MCF 10A (cell line): ENCODE measurements at regions of chr11 and their contacts with region 1.

Region 1: DNA sequence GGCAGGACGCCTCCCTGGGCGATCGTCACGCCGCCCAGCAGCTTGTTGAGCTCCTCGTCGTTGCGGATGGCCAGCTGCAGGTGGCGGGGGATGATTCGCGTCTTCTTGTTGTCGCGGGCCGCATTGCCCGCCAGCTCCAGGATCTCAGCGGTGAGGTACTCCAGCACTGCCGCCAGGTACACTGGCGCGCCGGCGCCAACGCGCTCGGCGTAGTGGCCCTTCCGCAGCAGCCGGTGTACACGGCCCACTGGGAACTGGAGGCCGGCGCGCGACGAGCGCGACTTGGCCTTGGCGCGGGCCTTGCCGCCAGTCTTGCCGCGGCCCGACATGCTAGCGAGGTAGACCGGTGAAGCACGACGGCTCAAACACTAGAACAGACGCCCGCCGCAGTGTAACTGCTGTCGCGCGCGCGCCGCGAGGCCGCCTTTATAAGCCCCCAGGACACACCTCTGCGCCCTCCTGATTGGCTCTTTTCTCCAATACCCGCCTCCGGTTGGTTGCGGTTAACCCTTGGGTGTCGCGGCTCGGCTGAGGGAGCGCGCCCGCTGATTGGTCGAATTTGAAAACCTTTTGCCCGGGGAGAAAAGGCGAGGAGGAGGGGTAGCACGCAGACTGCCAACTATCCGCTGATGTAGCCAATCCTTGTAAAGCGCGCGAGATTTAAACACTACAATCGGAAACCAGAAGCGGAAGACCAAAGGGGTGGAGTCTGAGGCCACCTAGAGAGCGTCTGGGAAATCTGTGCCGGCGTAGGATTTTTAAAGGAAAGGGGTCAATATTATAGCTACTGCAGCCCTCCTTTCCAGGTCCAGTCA is 6.4 kb downstream of the DPAGT1 start:
- DNase-seq: peak; percentile 100
- H3K4me3 Mint-ChIP-seq: peak overlapping the region; percentile 89
- H3K27ac Mint-ChIP-seq: peak overlapping the region; percentile 89
- H3K4me1 Mint-ChIP-seq: peaks cover 26% of the 10 kb centered on the region
- H3K27me3 Mint-ChIP-seq: no peaks in the 10 kb centered on the region
- CTCF ChIP-seq: peak; percentile 1

Region 2: GRCh38 chr11:119084663-119085436 is 10.4 kb before region 1 on chr11 and contains the start of gene HMBS:
- CTCF ChIA-PET with region 1: interaction called, 19 read pairs
- POLR2A ChIA-PET with region 1: interaction called, 59 read pairs
- intact Hi-C with region 1: no loop called
- DNase-seq: peak; percentile 93
- H3K4me3 Mint-ChIP-seq: peak within 1 kb of the TSS; percentile 94
- H3K27ac Mint-ChIP-seq: peak within 1 kb of the TSS; percentile 81
- H3K4me1 Mint-ChIP-seq: peaks cover 10% of the 10 kb centered on the region
- H3K27me3 Mint-ChIP-seq: no peaks in the 10 kb centered on the region
- CTCF ChIP-seq: no peak
- total RNA-seq, gene HMBS: 38.4 and 51.3 TPM in 2 replicates